ENCODE measurements at regions of chr1 and their contacts with region 1.

Region 1: GRCh38 chr1:185670187-185670627 is 64.0 kb upstream of the HMCN1 start:
- DNase-seq: peak; percentile 20 to 78
- ATAC-seq: peak; percentile 67 to 86 (median 77)
- H3K4me3 ChIP-seq: no peak overlapping the region
- H3K4me3 Mint-ChIP-seq: no peak overlapping the region
- H3K27ac ChIP-seq: no peak overlapping the region
- H3K27ac Mint-ChIP-seq: no peak overlapping the region
- H3K4me1 ChIP-seq: peaks cover 5% of the 10 kb centered on the region
- H3K4me1 Mint-ChIP-seq: peaks cover 14 to 22% of the 10 kb centered on the region in 2 donors
- H3K27me3 ChIP-seq: no peaks in the 10 kb centered on the region
- H3K27me3 Mint-ChIP-seq: no peaks in the 10 kb centered on the region
- CTCF ChIP-seq: peak; percentile 51

Region 2: DNA sequence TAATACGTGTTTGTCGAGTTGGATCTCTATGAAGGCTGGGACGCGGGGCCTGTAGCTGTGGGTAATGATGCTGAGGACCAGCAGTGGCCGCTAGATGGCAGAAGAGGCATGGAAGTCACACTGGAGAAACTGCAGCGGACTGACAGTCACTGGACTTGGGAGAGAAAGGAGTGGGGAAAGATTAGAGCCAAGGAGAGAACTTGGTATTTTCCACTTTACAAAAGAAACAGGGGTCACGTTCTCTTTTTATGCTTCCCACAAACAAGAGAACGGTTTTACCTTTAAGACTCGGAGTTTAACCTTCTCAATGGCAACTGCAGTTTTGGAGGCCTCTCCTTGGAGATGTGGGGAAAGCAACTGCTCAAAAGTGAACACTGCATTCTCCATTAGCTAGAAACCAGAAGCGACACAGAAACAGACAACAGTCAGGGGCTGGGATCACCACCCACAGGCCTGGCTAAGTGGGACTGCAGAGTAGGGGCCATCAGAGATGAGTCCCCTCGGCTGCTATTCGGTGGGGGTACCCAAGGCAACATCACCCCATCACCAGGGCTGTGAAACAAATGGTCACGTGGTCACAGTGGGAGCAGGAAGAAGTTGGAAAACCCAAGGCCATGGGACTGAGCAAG is 864.4 kb before region 1 on chr1:
- intact Hi-C with region 1: loop called (anchors 1 kb)
- DNase-seq: peak; percentile 79 to 92
- ATAC-seq: peak; percentile 88 to 100 (median 98)
- H3K4me3 ChIP-seq: no peak overlapping the region
- H3K4me3 Mint-ChIP-seq: no peak overlapping the region
- H3K27ac ChIP-seq: no peak overlapping the region
- H3K27ac Mint-ChIP-seq: peak overlapping the region in 1 of 2 donors; percentile 66
- H3K4me1 ChIP-seq: peaks cover 7% of the 10 kb centered on the region
- H3K4me1 Mint-ChIP-seq: peaks cover 6% of the 10 kb centered on the region in 2 donors
- H3K27me3 ChIP-seq: no peaks in the 10 kb centered on the region
- H3K27me3 Mint-ChIP-seq: no peaks in the 10 kb centered on the region
- CTCF ChIP-seq: peak; percentile 94

Region 3: GRCh38 chr1:185238447-185238846 is 431.8 kb before region 1 on chr1:
- intact Hi-C with region 1: loop called (anchors 1 kb)
- DNase-seq: peak in 1 of 2 donors; percentile 56
- ATAC-seq: peak in 2 of 3 donors; percentile 49 to 72
- H3K4me3 ChIP-seq: no peak overlapping the region
- H3K4me3 Mint-ChIP-seq: peak overlapping the region; percentile 54
- H3K27ac ChIP-seq: no peak overlapping the region
- H3K27ac Mint-ChIP-seq: no peak overlapping the region
- H3K4me1 ChIP-seq: no peaks in the 10 kb centered on the region
- H3K4me1 Mint-ChIP-seq: peaks cover 13 to 35% of the 10 kb centered on the region in 2 donors
- H3K27me3 ChIP-seq: no peaks in the 10 kb centered on the region
- H3K27me3 Mint-ChIP-seq: no peaks in the 10 kb centered on the region
- CTCF ChIP-seq: peak; percentile 67

Region 4: GRCh38 chr1:185426848-185427247 is 243.4 kb before region 1 on chr1:
- intact Hi-C with region 1: loop called (anchors 10 kb)
- DNase-seq: no peak
- ATAC-seq: no peak
- H3K4me3 ChIP-seq: no peak overlapping the region
- H3K4me3 Mint-ChIP-seq: no peak overlapping the region
- H3K27ac ChIP-seq: no peak overlapping the region
- H3K27ac Mint-ChIP-seq: no peak overlapping the region
- H3K4me1 ChIP-seq: peaks cover 16% of the 10 kb centered on the region
- H3K4me1 Mint-ChIP-seq: peaks cover 35 to 71% of the 10 kb centered on the region in 2 donors
- H3K27me3 ChIP-seq: no peaks in the 10 kb centered on the region
- H3K27me3 Mint-ChIP-seq: no peaks in the 10 kb centered on the region
- CTCF ChIP-seq: no peak

Measured in natural killer cell (primary cell).